GM10248 (cell line): ENCODE measurements at regions of chr10 and their contacts with region 1.

Region 1: DNA sequence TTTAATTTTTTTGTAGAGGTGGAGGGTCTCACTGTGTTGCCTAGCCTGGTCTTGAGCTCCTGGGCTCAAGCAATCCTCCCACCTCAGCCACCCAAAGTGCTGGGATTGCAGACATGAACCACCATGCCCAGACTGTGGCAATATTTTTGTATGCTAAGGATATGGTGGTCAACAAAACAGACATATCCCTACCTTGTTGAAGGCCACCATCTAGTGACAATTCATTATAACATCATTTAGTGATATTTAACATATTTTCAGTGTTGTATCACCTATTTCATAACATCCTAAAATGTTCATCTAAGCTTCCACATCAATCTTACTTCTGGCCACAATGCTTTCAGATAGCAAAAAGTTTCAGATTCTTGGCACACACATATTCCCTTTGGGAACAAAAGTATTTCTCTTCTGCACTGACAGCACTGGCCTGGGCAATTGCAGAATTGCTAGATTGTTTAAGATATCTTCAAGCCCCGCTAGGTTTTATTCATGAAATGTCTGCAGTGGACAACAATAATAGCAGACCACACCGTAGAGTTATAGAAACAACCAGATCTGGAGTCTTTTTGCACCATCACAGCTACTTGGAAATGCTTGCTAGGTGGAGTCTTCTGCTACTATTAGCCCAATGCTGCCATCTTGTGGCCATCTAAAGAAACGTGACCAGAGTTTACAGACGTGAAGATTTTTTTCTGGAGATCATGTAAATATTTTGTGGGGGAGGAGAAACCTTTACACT is 58.4 kb downstream of the DNAJC12 start:
- DNase-seq: peak; percentile 54
- CTCF ChIP-seq: peak; percentile 64

Region 2: DNA sequence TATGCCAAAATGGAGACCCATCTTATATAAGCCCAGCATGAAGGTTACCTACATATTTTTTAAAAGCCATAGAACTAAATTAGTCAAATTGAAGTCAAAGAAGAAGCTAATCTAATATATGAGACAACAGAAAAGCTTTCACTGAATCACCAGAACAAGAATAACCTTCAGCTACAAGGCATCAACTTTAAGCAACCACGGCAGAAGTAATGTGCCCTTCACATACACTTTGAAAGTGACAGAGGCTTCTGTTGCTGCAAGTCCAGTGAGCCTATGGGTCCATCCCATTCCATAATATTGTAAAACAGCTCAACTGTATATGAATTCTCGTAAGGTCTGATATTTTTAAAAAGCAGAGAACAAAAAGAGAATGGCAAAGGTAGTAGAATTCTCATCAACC is 120.1 kb before region 1 on chr10:
- CTCF ChIA-PET with region 1: interaction called, 89 read pairs
- POLR2A ChIA-PET with region 1: no interaction called
- DNase-seq: no peak
- CTCF ChIP-seq: no peak

Region 3: GRCh38 chr10:67697724-67698131 is 81.9 kb before region 1 on chr10:
- CTCF ChIA-PET with region 1: interaction called, 208 read pairs
- POLR2A ChIA-PET with region 1: no interaction called
- DNase-seq: peak; percentile 44
- CTCF ChIP-seq: peak; percentile 54

Region 4: DNA sequence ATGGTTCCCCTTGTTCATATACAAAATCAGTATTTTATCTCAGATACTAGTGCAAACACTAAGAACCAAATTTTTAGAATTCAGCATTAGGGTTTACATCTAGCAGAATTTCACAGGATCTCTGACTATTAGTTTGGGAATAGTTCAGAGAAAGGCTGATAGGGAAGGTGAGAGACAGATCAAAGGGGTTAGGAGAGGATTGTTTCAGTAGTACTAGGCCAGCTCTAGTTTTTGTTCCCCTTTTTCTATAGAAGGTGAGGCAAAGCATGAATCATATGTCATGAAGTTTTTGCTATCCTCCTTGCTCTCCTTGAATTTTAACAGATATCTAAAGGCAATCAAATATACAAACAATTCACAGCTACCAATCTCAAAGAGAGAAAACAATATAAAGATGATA is 57.5 kb before region 1 on chr10:
- CTCF ChIA-PET with region 1: interaction called, 14 read pairs
- POLR2A ChIA-PET with region 1: no interaction called
- DNase-seq: peak; percentile 31
- CTCF ChIP-seq: no peak

Region 5: GRCh38 chr10:67875340-67876238 is 96.0 kb after region 1 on chr10:
- CTCF ChIA-PET with region 1: no interaction called
- POLR2A ChIA-PET with region 1: no interaction called
- DNase-seq: no peak
- CTCF ChIP-seq: no peak

Region 6: GRCh38 chr10:68156373-68157185 is 376.9 kb after region 1 on chr10:
- CTCF ChIA-PET with region 1: interaction called, 10 read pairs
- POLR2A ChIA-PET with region 1: no interaction called
- DNase-seq: peak; percentile 34
- CTCF ChIP-seq: peak; percentile 76